Ovary (tissue), 10 donors: ENCODE measurements at regions of chr1 and their contacts with region 1.

Region 1: GRCh38 chr1:93680757-93681550 is 683 bp downstream of the BCAR3 start:
- DNase-seq: peak; percentile 84 to 92 (median 87)
- H3K4me3 ChIP-seq: peak overlapping the region; percentile 70
- H3K27ac ChIP-seq: peak overlapping the region; percentile 72 to 90
- H3K4me1 ChIP-seq: peaks cover 7% of the 10 kb centered on the region
- H3K27me3 ChIP-seq: no peaks in the 10 kb centered on the region
- CTCF ChIP-seq: peak in 2 of 3 donors; percentile 79 to 81
- EP300 ChIP-seq: no peak
- POLR2A ChIP-seq: peak; percentile 38

Region 2: DNA sequence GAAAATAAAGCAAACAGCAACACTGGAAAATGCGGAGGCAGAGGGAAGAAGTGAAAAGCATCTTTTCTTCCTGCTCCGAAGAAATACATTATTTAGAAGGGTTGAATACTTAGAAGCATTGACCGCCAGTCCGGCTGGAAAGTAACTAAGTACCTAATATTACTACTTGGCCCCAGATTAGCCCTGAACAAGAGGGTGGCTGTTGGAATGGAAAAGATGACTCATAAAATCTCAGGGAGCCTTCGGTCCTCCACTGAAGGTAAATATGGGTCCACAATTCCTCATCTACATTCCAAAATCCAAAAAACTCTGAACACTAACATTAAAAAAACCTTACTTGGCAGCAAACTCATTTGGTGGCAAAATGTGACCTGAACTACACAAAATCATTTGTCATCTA is 39.4 kb before region 1 on chr1:
- intact Hi-C with region 1: loop called in 1 of 4 experiments (anchors 5 kb)
- DNase-seq: no peak
- H3K4me3 ChIP-seq: no peak overlapping the region
- H3K27ac ChIP-seq: peak overlapping the region; percentile 47 to 48
- H3K4me1 ChIP-seq: peaks cover 3% of the 10 kb centered on the region
- H3K27me3 ChIP-seq: no peaks in the 10 kb centered on the region
- CTCF ChIP-seq: no peak
- EP300 ChIP-seq: no peak
- POLR2A ChIP-seq: no peak